H1 (cell line): ENCODE measurements at regions of chr20 and their contacts with region 1.

Region 1: GRCh38 chr20:50987592-50988210 is 29.1 kb downstream of the MOCS3 start:
- DNase-seq: peak in 1 of 2 experiments; percentile 83
- H3K4me3 ChIP-seq: no peak overlapping the region
- H3K27ac ChIP-seq: no peak overlapping the region
- H3K4me1 ChIP-seq: peaks cover 3 to 17% (median 7%) of the 10 kb centered on the region in 4 experiments; a peak in 6 of 7 replicates
- H3K27me3 ChIP-seq: no peaks in the 10 kb centered on the region; a peak in 1 of 7 replicates
- CTCF ChIP-seq: peak; percentile 46 to 93 (median 85)
- EP300 ChIP-seq: no peak
- POLR2A ChIP-seq: no peak
- RAD21 ChIP-seq: peak; percentile 99

Region 2: GRCh38 chr20:51014797-51015722 is 27.4 kb after region 1 on chr20:
- CTCF ChIA-PET with region 1: interaction called, 28 read pairs
- POLR2A ChIA-PET with region 1: interaction called, 4 read pairs
- DNase-seq: peak in 1 of 2 experiments; percentile 93
- H3K4me3 ChIP-seq: no peak overlapping the region; a peak in 1 of 8 replicates
- H3K27ac ChIP-seq: no peak overlapping the region
- H3K4me1 ChIP-seq: peaks cover 3 to 19% (median 9%) of the 10 kb centered on the region in 4 experiments
- H3K27me3 ChIP-seq: no peaks in the 10 kb centered on the region
- CTCF ChIP-seq: peak; percentile 76 to 96 (median 93)
- EP300 ChIP-seq: no peak
- POLR2A ChIP-seq: no peak
- RAD21 ChIP-seq: peak; percentile 72 to 75

Region 3: DNA sequence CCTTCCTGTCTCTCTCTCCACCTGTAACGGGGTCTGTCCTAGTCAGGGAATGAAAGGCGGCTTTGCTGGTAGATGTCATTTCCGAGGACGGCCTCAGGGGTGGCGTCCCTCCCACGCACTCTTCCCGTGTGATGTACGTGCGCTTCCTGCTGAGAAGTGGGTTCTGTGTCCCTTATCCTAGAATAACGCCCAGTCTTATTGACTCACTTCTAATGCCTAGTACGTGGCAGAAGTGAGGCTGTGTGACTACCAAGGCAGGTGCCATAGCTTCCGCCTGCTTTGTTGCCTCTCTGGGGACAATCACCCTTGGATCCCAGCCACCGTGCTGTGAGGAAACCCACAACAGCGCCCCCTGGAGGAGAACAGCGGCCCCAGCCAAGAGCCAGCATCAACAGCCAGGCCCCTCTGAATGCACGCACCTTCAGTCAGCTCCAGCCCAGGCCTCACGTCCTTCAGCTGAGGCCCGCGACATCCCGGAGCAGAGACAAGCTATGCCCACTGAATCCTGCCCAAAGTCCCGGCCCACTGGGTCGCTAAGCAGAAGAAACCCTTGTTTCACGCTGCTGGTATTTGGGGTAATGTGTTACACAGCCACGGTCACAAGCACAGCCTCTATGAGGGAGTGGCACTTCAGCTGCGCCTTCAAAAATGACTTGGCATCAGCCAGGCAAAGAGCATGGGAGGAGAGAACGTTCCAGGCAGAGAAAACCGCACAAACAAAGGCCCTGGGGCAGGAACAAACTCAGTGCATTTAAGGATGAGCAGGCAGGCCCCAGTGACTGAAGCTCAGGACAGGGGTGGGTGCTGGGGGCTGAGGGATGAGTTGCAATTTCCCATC is 330.6 kb after region 1 on chr20:
- CTCF ChIA-PET with region 1: interaction called, 165 read pairs
- POLR2A ChIA-PET with region 1: interaction called, 8 read pairs
- DNase-seq: peak; percentile 43 to 98
- H3K4me3 ChIP-seq: no peak overlapping the region
- H3K27ac ChIP-seq: no peak overlapping the region
- H3K4me1 ChIP-seq: peaks cover 0 to 21% (median 8%) of the 10 kb centered on the region in 4 experiments; a peak in 6 of 7 replicates
- H3K27me3 ChIP-seq: peaks cover 0 to 9% (median 6%) of the 10 kb centered on the region in 4 experiments; a peak in 5 of 7 replicates
- CTCF ChIP-seq: peak; percentile 86 to 94 (median 93)
- EP300 ChIP-seq: no peak
- POLR2A ChIP-seq: no peak
- RAD21 ChIP-seq: peak; percentile 63 to 75

Region 4: DNA sequence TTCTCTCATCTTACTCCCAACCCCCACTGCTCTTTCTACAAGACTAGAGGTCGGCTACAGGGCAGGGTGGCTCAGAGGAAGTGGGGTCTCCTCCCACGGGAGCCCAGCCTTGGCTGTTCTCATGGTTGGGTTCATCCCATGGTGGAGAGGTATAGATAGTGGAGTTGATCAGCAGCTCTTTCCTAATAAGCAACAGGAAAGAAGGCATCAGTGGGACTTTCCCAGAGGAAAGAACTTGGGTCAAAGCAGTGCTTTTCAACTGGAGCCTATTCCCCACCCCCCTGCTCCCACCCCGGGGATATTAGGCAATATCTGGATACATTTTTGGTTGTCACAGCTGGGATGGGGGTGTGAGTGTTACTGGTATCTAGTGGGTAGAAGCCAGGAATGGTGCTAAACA is 353.9 kb after region 1 on chr20:
- CTCF ChIA-PET with region 1: interaction called, 11 read pairs
- POLR2A ChIA-PET with region 1: no interaction called
- DNase-seq: no peak
- H3K4me3 ChIP-seq: no peak overlapping the region
- H3K27ac ChIP-seq: no peak overlapping the region
- H3K4me1 ChIP-seq: no peaks in the 10 kb centered on the region
- H3K27me3 ChIP-seq: no peaks in the 10 kb centered on the region; a peak in 1 of 7 replicates
- CTCF ChIP-seq: no peak
- EP300 ChIP-seq: no peak
- POLR2A ChIP-seq: no peak
- RAD21 ChIP-seq: no peak

Region 5: DNA sequence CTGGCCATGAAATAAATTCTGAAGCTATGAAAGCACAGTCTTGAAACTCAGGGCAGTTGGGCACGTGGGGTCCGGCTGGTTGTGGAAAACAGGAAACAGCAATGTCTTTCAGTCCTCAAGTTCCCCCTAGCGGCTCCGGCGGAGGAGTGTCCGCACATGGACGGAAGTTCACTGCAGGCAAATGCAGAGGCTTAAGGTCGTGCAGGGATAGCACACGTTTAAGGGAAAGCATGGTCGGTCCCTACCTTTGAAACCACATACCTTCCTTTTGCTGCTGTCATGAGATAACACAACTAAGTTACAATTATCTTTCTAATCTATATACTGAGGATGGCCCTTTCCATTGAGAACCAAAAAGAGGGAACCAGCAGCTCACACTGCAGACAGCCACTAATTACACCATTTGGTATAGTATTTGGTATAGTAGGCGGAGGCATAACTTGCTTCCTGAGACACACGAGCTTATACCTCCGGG is 607.4 kb after region 1 on chr20:
- CTCF ChIA-PET with region 1: interaction called, 22 read pairs
- POLR2A ChIA-PET with region 1: interaction called, 3 read pairs
- DNase-seq: peak; percentile 56 to 81
- H3K4me3 ChIP-seq: no peak overlapping the region
- H3K27ac ChIP-seq: no peak overlapping the region
- H3K4me1 ChIP-seq: peaks cover 0 to 8% (median 2%) of the 10 kb centered on the region in 4 experiments; a peak in 5 of 7 replicates
- H3K27me3 ChIP-seq: no peaks in the 10 kb centered on the region
- CTCF ChIP-seq: peak; percentile 92 to 96 (median 94)
- EP300 ChIP-seq: 0 out of 3 replicates have a peak, but pooled peaks of 1 of the 2 experiments have one; percentile 16
- POLR2A ChIP-seq: no peak
- RAD21 ChIP-seq: peak; percentile 96

Region 6: DNA sequence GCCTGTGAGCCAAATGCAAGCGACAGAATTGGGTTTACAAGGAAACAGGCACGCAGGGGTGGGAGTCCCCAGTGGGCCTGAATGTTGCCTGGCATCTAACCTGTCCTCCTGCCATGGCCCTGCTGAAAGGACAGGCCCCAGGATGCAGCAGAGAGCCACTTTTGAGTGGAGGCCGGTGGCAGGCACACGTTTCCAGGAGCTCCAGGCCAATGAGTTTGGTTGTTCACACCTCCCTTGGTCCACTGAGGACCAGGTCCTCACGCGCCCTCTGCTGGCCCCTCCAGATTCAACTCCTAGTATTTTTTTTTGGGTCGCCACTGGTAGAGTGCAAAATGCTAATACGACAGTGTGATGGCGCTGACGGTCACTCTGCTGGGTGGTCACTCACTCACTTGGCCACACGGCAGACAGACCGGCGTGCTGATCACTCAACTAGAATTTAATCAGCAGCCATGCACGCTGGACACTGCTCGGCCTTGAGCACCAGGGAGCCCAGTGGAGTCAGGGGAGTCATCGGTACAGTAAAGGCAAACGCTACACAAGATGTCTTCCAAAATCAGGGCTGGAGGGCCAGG is 636.5 kb after region 1 on chr20:
- CTCF ChIA-PET with region 1: interaction called, 15 read pairs
- POLR2A ChIA-PET with region 1: no interaction called
- DNase-seq: peak; percentile 53 to 94
- H3K4me3 ChIP-seq: no peak overlapping the region
- H3K27ac ChIP-seq: no peak overlapping the region
- H3K4me1 ChIP-seq: peaks cover 0 to 2% (median 0%) of the 10 kb centered on the region in 4 experiments; a peak in 1 of 7 replicates
- H3K27me3 ChIP-seq: no peaks in the 10 kb centered on the region
- CTCF ChIP-seq: peak; percentile 63 to 91 (median 88)
- EP300 ChIP-seq: no peak
- POLR2A ChIP-seq: no peak
- RAD21 ChIP-seq: peak; percentile 72 to 85